Calu3 (cell line): ENCODE measurements at regions of chr2 and their contacts with region 1.

Region 1: GRCh38 chr2:202870431-202871299 is 901 bp downstream of the ICA1L start:
- DNase-seq: peak; percentile 80
- H3K4me3 Mint-ChIP-seq: peak overlapping the region; percentile 83
- H3K27ac Mint-ChIP-seq: peak overlapping the region; percentile 70
- H3K4me1 Mint-ChIP-seq: no peaks in the 10 kb centered on the region
- H3K27me3 Mint-ChIP-seq: no peaks in the 10 kb centered on the region
- CTCF ChIP-seq: peak; percentile 71

Region 2: GRCh38 chr2:202529389-202529788 is 341.3 kb before region 1 on chr2:
- CTCF ChIA-PET with region 1: no interaction called
- intact Hi-C with region 1: no loop called
- DNase-seq: no peak
- H3K4me3 Mint-ChIP-seq: no peak overlapping the region
- H3K27ac Mint-ChIP-seq: no peak overlapping the region
- H3K4me1 Mint-ChIP-seq: peaks cover 7% of the 10 kb centered on the region
- H3K27me3 Mint-ChIP-seq: no peaks in the 10 kb centered on the region
- CTCF ChIP-seq: no peak

Region 3: DNA sequence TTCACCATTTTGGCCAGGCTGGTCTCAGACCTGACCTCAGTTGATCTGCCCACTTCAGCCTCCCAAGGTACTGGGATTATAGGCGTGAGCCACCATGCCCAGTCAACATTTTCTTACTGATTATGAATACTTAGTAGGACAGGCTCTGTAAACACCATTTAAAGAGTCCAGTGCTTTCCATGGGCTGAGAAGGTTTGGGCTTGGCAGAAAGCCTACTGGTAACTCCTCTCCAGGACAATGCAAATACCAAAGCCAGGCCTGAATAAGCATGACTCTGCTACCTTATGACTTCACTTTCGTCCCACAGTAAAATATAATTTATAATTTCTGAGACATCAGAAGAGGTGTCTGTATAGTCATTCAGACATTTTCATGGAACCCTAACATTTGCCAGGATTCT is 296.1 kb before region 1 on chr2:
- CTCF ChIA-PET with region 1: no interaction called
- intact Hi-C with region 1: loop called (anchors 5 kb)
- DNase-seq: no peak
- H3K4me3 Mint-ChIP-seq: no peak overlapping the region
- H3K27ac Mint-ChIP-seq: no peak overlapping the region
- H3K4me1 Mint-ChIP-seq: no peaks in the 10 kb centered on the region
- H3K27me3 Mint-ChIP-seq: no peaks in the 10 kb centered on the region
- CTCF ChIP-seq: no peak

Region 4: DNA sequence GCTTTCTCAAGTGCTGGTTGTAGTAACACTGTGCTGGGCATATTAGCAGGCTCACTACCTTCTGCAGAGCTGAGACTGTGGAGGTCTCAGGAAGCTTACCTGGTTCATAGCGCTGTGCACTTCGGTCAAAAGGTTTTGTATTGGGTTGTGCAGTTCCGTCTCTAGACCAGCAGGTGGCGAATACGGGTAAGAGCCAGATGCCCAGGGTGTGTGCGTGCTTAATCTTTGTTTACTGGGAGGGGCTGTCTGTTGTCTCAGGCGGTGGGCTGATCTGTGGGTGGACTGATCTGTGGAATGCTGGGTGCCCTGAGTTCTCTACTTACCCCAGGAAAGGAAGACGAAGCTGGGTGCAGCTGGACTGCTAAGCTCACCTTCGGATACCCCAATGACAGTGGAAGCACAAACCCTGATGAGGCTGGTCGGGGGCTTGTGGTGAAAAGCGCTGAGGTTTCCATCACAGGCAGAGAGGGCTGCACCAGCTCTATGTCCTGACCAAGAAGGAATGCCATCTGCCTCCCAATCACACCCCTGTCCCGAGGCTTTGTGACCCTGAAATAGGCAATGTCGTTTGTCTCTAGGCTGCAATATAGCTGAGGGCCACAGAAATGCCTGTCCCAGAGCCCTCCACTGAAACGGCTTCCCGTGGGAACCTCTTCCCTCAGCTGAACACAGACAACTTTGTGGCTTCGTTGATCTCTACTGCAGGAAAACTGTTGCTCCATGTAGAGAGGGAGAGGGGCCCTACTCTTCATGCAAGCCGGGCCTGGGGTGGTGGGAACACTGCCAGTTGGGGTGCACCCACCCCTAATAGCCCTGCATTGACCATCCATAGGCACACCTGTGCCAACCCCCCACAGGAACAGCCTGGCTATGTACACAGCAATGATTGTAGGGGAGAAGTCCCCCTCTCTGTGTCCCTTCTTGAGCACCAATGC is 281.8 kb before region 1 on chr2:
- CTCF ChIA-PET with region 1: interaction called, 17 read pairs
- intact Hi-C with region 1: loop called (anchors 5 kb)
- DNase-seq: peak; percentile 66
- H3K4me3 Mint-ChIP-seq: no peak overlapping the region
- H3K27ac Mint-ChIP-seq: no peak overlapping the region
- H3K4me1 Mint-ChIP-seq: peaks cover 10% of the 10 kb centered on the region
- H3K27me3 Mint-ChIP-seq: no peaks in the 10 kb centered on the region
- CTCF ChIP-seq: peak; percentile 98

Region 5: GRCh38 chr2:202705446-202706020 is 165.1 kb before region 1 on chr2:
- CTCF ChIA-PET with region 1: no interaction called
- intact Hi-C with region 1: no loop called
- DNase-seq: no peak
- H3K4me3 Mint-ChIP-seq: no peak overlapping the region
- H3K27ac Mint-ChIP-seq: no peak overlapping the region
- H3K4me1 Mint-ChIP-seq: peaks cover 11% of the 10 kb centered on the region
- H3K27me3 Mint-ChIP-seq: no peaks in the 10 kb centered on the region
- CTCF ChIP-seq: no peak

Region 6: GRCh38 chr2:203022751-203023150 is 152.1 kb after region 1 on chr2:
- CTCF ChIA-PET with region 1: no interaction called
- intact Hi-C with region 1: no loop called
- DNase-seq: no peak
- H3K4me3 Mint-ChIP-seq: no peak overlapping the region
- H3K27ac Mint-ChIP-seq: no peak overlapping the region
- H3K4me1 Mint-ChIP-seq: peaks cover 20% of the 10 kb centered on the region
- H3K27me3 Mint-ChIP-seq: no peaks in the 10 kb centered on the region
- CTCF ChIP-seq: no peak